AG04450 (cell line): ENCODE measurements at regions of chr10 and their contacts with region 1.

Region 1: GRCh38 chr10:119199231-119199992 is 8.0 kb upstream of the GRK5 start:
- DNase-seq: no peak
- H3K4me3 ChIP-seq: no peak overlapping the region
- H3K27ac ChIP-seq: no peak overlapping the region
- H3K27me3 ChIP-seq: no peaks in the 10 kb centered on the region
- CTCF ChIP-seq: peak; percentile 87

Region 2: GRCh38 chr10:119006451-119007210 is 192.8 kb before region 1 on chr10:
- CTCF ChIA-PET with region 1: no interaction called
- POLR2A ChIA-PET with region 1: no interaction called
- DNase-seq: peak; percentile 97
- H3K4me3 ChIP-seq: no peak overlapping the region
- H3K27ac ChIP-seq: peak overlapping the region; percentile 62
- H3K27me3 ChIP-seq: peaks cover 19% of the 10 kb centered on the region
- CTCF ChIP-seq: peak; percentile 15; the same call in 1 of the 2 replicates

Region 3: DNA sequence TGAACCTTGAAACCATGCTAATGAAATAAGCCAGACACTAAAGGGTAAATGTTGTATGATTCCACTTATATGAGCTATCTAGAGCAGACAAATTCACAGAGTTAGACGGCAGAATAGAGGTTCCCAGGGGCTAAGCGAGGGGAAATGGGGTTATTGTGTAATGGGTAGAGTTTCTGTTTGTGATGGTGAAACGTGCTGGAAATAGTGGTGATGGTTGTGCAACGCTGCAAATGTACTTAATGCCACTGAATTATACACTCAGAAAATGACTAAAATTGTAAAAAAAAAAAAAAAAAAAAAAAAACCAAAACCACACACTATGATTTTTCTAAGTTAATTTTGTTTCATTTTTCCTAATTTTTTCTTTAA is 63.9 kb before region 1 on chr10:
- CTCF ChIA-PET with region 1: interaction called, 12 read pairs
- POLR2A ChIA-PET with region 1: interaction called, 4 read pairs
- DNase-seq: peak; percentile 36
- H3K4me3 ChIP-seq: no peak overlapping the region
- H3K27ac ChIP-seq: peak overlapping the region; percentile 57
- H3K27me3 ChIP-seq: no peaks in the 10 kb centered on the region
- CTCF ChIP-seq: no peak

Region 4: DNA sequence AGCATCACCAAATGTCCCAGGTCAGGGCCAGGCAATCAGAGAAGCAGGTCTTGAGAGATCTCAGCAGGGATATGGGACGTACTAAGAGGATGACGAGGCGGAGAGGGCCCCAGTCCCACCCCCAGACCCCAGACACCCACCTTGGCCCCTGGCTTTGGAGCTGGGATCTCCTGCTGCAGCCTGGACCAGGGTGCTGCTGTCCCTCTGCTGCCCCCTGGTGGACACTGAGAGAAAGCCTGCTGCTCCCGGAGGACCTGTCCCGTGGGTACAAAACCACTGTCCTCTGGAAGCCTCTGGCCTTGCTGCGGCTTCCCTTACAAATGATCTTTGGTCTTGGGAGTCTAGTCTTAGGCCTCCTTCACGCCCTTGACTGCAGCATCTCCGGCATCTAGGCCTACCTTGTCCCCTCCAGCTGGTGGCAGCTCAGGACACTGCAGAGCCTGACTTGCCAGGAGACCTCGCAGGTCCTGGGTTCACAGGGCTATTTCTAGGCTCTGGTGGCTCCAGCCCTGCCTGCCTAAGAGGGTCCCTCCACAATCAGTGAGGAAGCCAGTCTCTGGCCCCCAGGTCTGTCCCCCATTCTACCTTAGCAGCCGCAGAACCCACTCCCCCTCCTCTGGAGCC is 246.0 kb after region 1 on chr10:
- CTCF ChIA-PET with region 1: interaction called, 70 read pairs
- POLR2A ChIA-PET with region 1: interaction called, 6 read pairs
- DNase-seq: peak; percentile 50
- H3K4me3 ChIP-seq: no peak overlapping the region
- H3K27ac ChIP-seq: no peak overlapping the region
- H3K27me3 ChIP-seq: no peaks in the 10 kb centered on the region
- CTCF ChIP-seq: peak; percentile 93

Region 5: DNA sequence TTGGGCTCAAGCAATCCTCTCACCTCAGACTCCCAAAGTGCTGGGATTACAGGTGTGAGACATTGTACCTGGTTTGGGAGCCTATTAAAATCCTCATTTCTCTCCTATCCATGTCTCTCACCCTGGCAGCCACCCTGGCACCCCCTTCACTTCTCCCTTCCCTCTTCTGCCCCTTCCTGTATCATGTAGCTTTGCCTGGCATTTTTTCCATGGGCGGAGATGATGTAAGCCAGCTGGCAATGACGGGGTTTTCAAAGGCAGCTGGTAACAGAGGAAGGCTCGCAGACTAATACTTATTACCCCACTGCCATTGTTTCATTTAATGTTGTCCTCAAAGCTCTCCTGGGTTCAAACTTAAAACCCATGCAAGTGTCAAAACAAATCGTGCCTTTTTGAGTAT is 281.3 kb after region 1 on chr10:
- CTCF ChIA-PET with region 1: interaction called, 11 read pairs
- POLR2A ChIA-PET with region 1: interaction called, 3 read pairs
- DNase-seq: no peak
- H3K4me3 ChIP-seq: no peak overlapping the region
- H3K27ac ChIP-seq: no peak overlapping the region
- H3K27me3 ChIP-seq: peaks cover 29% of the 10 kb centered on the region
- CTCF ChIP-seq: no peak

Region 6: DNA sequence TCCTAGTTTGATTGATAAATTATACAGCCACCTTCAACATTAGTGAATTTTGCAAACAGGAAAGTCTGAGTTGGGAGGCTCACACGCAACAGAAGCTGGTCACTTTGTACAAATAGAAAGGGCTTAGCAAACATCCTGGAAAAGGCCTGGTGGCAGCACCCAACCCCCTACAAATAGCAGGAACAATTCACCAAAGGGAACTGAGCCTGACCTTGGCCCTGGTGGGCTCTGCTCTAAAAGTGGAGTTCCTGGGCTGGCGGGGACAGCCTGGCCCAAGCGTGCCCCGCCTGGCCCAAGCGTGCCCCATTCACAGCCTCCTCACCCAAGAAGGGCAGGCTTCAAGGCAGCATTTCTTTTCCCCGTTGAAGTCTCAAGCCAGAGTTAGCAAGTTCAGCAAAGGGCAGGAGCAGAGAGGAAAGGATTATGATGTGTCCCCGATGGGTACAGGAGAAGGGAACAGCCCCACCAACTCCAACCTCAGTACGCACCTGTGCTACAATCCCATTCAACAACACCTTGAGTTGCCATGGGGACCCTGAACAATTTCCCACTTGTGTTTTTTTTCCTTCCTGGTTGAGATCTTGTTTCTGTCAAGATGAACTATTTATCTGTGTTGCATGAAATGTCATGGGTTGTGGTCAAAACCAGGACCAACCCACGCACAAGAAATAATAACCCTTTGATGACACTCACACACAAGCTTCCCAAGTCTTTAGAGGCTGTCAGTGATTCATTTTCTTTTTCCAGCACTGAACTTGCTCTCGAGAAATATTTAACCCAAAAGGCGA is 299.7 kb after region 1 on chr10:
- CTCF ChIA-PET with region 1: interaction called, 10 read pairs
- POLR2A ChIA-PET with region 1: no interaction called
- DNase-seq: no peak
- H3K4me3 ChIP-seq: no peak overlapping the region
- H3K27ac ChIP-seq: no peak overlapping the region
- H3K27me3 ChIP-seq: no peaks in the 10 kb centered on the region
- CTCF ChIP-seq: no peak

Region 7: DNA sequence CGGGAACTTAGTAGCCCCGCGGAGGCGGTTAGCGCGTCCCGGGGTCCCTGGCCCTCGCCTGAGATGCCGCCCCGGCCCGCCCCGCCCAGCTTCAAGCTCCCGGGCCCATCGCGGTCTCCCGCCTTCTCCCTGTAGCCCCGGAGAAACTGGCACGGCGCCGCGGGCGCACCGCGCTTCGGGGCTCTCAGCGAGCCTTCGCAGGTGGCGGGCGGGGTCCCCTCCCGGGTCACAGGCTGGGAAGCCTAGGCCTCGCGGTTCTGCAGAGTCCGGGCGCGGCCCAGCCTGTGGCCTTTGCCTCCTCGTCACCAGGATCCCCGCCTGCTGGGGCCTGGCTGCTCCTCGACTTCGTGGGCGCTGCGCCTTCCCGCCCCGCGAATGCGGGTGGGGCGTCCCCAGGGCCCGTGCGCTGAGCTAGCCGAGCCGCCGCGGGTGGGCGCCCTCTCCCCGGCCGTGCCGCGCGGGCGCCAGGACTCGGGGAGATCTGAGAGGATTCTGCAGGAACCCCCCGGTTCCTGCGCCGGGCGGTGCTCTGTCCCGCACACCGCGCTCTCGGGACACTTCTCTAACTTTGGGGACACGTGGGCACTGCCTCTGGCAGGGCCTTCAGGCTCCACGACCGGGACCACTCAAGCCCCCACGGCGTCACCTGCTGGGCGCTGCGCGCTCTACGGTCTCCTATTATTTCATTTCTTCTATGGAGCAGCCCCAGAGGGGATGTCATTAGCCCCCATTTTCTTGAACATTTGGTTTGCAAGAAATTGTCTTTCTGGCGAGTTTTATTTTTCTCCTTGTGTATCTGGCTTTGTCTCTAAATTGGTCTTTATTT is 343.8 kb after region 1 on chr10:
- CTCF ChIA-PET with region 1: interaction called, 37 read pairs
- POLR2A ChIA-PET with region 1: interaction called, 3 read pairs
- DNase-seq: no peak
- H3K4me3 ChIP-seq: peak overlapping the region; percentile 80
- H3K27ac ChIP-seq: peak overlapping the region; percentile 11
- H3K27me3 ChIP-seq: peaks cover 1% of the 10 kb centered on the region
- CTCF ChIP-seq: peak; percentile 61

Region 8: DNA sequence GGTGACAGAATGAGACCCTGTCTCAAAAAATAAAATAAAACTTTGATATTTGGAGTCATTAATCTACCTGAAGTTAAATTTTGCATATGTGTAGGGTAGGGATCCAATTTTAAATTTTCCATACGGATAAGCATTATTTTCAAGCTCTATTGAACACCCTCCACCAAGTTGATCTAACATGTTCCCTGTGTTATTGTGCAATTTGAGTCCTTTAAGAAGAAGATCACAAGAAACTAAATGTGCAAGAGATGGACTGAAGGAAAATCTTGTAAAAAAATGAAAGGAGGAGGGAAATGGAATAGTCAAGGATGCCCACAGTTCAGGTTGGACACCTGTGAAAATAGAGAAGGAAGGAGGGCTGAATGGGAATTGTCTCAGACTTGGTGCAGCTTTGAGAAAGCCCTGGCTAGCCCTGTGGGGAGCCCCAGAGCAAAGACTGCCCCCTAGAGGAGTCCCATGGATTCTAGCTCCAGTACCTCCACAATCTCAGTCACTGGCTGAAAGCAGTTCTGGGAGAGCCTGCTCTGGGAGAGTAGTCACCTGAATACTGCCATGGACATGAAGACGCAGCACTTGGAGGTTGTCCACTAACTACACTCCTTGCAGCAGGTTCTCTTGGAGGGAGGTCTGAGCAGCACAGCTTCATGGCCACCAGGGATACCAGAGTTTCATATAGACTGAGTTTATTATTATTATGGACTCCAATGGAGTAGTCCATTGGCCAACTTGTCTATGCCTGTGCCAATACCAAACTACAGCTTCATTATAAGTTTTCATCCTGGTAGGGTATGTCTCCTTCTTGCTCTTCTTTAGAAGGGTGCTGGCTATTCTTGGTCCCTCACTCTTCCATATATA is 403.1 kb after region 1 on chr10:
- CTCF ChIA-PET with region 1: interaction called, 17 read pairs
- POLR2A ChIA-PET with region 1: no interaction called
- DNase-seq: no peak
- H3K4me3 ChIP-seq: no peak overlapping the region
- H3K27ac ChIP-seq: no peak overlapping the region
- H3K27me3 ChIP-seq: no peaks in the 10 kb centered on the region
- CTCF ChIP-seq: peak; percentile 63